Astrocyte of the cerebellum (primary cell): ENCODE measurements at regions of chr21 and their contacts with region 1.

Region 1: DNA sequence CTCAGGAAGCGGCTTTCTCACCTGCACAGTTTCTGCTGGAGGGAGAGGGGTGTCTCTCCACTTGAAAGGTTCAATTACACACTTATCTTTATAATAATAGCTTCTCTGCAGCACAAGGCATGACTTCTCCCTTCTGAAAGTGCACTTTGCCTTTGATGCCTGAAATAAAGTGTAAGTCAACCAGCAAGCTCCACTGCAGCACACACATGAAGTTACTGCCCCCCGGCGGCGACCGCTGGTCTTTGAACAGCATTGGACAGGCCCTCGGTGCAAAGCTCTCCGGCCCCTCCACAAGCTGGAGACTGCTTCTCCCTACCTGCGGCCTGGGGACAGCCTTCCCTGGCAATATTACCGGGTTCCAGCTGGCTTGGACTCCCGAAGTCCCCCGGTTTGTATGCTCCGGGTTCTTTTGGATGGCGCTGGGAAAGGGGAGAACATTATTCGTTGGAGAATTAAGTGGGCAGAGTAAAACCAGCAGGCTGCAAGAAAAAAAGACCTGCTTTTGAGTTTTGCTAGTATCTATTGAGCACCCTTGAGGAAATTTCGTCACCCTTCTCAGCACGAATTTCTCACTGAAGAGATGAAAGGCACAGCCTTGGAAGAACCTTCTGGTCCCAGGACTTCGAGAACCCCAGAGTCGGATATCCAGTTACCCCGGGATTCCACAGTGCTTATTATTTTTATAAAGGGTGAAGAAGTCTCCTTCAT is 11.8 kb downstream of the RCAN1 start:
- DNase-seq: peak; percentile 55
- H3K4me3 ChIP-seq: no peak overlapping the region
- CTCF ChIP-seq: peak; percentile 71

Region 2: GRCh38 chr21:34534522-34534921 is 68.6 kb before region 1 on chr21:
- in situ Hi-C with region 1: loop called (anchors 5 kb)
- DNase-seq: no peak
- H3K4me3 ChIP-seq: no peak overlapping the region
- CTCF ChIP-seq: no peak

Region 3: DNA sequence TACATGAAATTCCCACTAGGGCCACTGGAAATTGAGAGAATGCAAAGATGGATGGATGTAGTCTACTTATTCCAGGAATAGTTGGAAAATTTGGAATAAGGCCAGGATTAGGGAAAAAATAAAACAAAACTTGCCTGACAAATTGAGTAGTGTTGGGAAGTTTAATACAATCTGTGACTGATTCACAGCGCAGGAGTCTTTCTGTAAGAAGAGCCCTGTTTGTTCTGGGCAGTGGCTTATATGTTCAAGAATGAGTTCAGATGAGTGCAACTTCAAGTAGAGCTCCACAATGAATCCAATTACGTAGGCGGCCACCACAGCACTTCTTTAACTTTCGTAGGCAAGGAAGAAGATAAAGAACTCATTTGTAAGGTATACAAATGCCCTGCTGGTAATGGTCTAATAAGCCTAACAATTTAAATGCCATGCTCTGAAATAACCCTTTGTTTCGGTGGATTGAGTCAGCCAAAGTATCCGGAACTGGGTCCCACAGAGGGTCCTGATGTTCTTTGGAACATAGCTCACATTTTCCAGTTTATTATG is 44.0 kb before region 1 on chr21:
- in situ Hi-C with region 1: no loop called
- DNase-seq: peak; percentile 41
- H3K4me3 ChIP-seq: no peak overlapping the region
- CTCF ChIP-seq: no peak